Activated T-helper 1 cell treated with anti-CD3 and anti-CD28 coated beads, Interleukin-12 subunit alpha, Interleukin-12 subunit beta, Interleukin-2, Interleukin-4 antibody, amounts not matched to agents 30 ng/mL and 10 ng/mL and 1 ng/mL, durations not matched to agents 14 hours and 24 hours and 36 hours (primary cell): ENCODE measurements at regions of chr18 and their contacts with region 1.

Region 1: DNA sequence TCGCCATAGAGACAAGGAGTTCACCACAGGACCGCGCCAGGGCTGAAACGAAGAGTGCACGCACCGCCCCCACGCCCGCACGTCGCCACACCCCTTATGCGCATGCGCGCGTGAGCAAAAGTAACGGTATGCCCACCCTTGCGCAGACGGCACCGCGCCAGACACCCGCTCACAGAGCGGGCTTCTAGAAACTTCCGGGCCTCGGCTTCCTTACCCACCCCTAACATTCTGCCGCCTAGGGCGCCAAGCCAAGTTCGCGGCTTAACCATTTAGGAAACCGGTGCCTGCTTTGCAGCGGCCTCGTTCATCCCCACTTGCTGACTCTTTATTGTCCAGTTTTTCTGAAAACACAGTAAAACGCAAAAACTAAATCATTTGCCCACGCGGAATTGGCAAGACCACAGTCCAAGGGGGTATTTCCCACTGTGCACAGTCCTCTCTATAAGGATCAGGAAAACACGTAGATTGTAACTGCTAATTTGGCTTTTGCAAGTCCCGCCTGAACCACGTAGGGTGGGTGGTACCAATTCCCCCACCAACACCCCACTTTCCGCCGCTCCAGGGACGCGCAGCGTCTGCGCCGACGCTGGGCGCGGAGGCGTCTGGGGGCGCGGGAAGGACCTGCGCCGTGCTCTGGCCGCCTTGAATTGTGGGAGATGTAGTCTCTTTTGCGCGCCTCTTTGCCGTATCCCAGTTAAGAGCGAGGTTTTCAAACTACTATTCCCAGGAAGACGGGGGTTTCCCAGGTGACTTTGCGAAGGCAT is at the starts of genes FBXO15 and TIMM21:
- DNase-seq: peak; percentile 94
- H3K4me3 Mint-ChIP-seq: peak within 1 kb of the TSS; percentile 92
- H3K27ac Mint-ChIP-seq: peak within 1 kb of the TSS; percentile 96
- H3K4me1 Mint-ChIP-seq: peaks cover 51% of the 10 kb centered on the region
- H3K27me3 Mint-ChIP-seq: peaks cover 8% of the 10 kb centered on the region
- total RNA-seq, gene FBXO15: 0.83 and 1.0 TPM in 2 replicates
- total RNA-seq, gene TIMM21: 54.1 and 60.2 TPM in 2 replicates

Region 2: GRCh38 chr18:73980289-73980979 is 167.5 kb before region 1 on chr18:
- intact Hi-C with region 1: no loop called
- DNase-seq: no peak
- H3K4me3 Mint-ChIP-seq: no peak overlapping the region
- H3K27ac Mint-ChIP-seq: no peak overlapping the region
- H3K4me1 Mint-ChIP-seq: peaks cover 7% of the 10 kb centered on the region
- H3K27me3 Mint-ChIP-seq: peaks cover 2% of the 10 kb centered on the region

Region 3: DNA sequence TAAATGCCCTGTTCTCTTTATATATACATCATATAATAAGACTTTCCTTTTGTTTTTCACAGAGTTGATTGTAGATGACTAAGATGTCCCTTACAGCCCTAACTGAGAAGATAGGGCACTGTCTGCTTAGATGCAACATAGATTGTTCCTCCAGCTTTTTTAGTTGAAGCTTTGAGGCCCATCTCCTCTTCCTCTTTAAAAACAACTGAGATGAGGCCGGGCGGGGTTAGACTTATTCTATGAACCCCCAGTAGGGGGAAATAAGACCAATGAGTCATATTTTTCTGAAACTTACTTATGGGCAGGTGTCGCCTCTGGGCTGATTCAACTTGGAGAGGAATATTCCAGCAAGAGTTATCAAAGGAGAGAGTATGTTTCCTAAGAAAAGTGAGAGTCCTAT is 84.9 kb before region 1 on chr18:
- intact Hi-C with region 1: loop called (anchors 2 kb)
- DNase-seq: no peak
- H3K4me3 Mint-ChIP-seq: peak overlapping the region; percentile 19
- H3K27ac Mint-ChIP-seq: peak overlapping the region; percentile 77
- H3K4me1 Mint-ChIP-seq: peaks cover 50% of the 10 kb centered on the region
- H3K27me3 Mint-ChIP-seq: no peaks in the 10 kb centered on the region

Region 4: GRCh38 chr18:74116633-74117554 is 31.1 kb before region 1 on chr18:
- intact Hi-C with region 1: loop called (anchors 2 kb)
- DNase-seq: no peak
- H3K4me3 Mint-ChIP-seq: no peak overlapping the region
- H3K27ac Mint-ChIP-seq: no peak overlapping the region
- H3K4me1 Mint-ChIP-seq: peaks cover 8% of the 10 kb centered on the region
- H3K27me3 Mint-ChIP-seq: peaks cover 2% of the 10 kb centered on the region

Region 5: DNA sequence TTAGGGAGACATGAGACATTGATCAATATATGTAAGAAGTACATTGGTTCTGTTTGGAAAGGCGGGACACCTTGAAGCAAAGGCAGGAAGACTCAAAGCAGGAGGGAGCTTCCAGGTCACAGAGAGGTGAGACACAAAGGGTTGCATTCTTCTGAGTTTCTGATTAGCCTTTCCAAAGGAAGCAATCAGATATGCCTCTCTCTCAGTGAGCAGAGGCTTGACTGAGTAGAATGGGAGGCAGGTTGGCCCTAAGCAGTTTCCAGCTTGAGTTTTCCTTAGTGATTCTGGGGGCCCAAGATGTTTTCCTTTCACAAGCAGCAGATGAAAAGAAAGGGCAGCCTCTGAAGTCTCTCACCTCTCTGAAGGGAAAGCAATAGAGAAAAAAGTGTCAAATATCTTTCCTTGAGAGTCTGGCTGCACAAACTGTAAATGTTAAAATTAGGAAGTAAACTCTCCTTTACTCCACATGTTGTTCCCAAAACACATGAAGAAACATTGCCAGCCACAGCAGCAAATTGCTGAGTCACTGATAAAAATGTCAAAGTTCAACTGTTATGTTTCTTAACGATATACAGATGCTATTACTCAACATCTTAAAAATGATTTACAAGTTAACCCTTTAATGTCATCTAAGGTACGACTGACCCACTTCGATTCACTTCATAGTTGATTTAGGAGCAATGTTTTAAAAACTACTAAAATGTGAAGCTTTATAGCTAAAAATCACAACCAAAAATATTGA is 103.5 kb after region 1 on chr18:
- intact Hi-C with region 1: loop called (anchors 1 kb)
- DNase-seq: no peak
- H3K4me3 Mint-ChIP-seq: no peak overlapping the region
- H3K27ac Mint-ChIP-seq: no peak overlapping the region
- H3K4me1 Mint-ChIP-seq: peaks cover 19% of the 10 kb centered on the region
- H3K27me3 Mint-ChIP-seq: no peaks in the 10 kb centered on the region

Region 6: DNA sequence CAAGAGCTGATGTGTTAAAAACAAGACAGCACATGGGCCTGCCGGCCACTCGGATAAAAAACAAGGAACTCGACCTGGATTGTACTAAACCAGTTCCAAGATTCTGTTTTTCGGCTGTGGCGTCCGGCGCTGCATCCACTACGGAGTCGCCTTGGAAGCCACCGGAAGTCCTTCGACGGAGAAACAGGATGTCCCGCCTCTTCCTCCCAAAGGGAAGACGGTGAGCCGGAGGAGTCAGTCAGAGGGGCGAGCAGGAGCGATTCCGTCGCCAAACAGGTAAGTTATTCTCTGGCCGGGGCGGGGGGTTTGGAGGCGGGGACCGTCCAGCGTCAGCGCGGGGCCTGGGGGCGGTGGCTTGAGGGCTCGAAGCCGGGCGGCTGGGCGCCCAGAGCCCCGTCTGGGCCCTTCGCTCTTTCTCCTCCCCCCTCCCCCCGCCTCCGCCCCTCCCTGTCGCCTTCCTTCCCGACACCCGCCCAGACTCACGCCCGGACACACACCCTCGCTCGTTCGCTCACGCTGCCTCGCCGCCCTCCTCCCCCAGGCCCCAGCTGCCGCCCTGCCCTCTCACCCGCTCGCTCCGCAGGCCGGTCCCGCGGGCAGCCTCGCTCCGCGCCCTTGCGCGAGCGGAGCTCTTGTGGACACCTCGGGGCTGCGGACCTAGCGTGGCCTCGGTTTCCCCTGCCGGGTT is 449.8 kb after region 1 on chr18 and contains the start of gene ZNF407:
- intact Hi-C with region 1: loop called (anchors 1 kb)
- DNase-seq: peak; percentile 83
- H3K4me3 Mint-ChIP-seq: peak within 1 kb of the TSS; percentile 97
- H3K27ac Mint-ChIP-seq: peak within 1 kb of the TSS; percentile 96
- H3K4me1 Mint-ChIP-seq: peaks cover 45% of the 10 kb centered on the region
- H3K27me3 Mint-ChIP-seq: no peaks in the 10 kb centered on the region
- total RNA-seq, gene ZNF407: 19.8 and 21.4 TPM in 2 replicates